ENCODE measurements at regions of chr13 and their contacts with region 1.

Region 1: GRCh38 chr13:31236211-31236786 is 36.5 kb downstream of the B3GLCT start:
- DNase-seq: peak in 4 of 5 donors; percentile 4 to 27 (median 8)
- H3K4me3 ChIP-seq: no peak overlapping the region
- H3K4me3 Mint-ChIP-seq: no peak overlapping the region
- H3K27ac ChIP-seq: no peak overlapping the region
- H3K27ac Mint-ChIP-seq: no peak overlapping the region
- H3K4me1 ChIP-seq: no peaks in the 10 kb centered on the region
- H3K4me1 Mint-ChIP-seq: peaks cover 0 to 4% (median 1%) of the 10 kb centered on the region in 4 donors
- H3K27me3 ChIP-seq: no peaks in the 10 kb centered on the region
- H3K27me3 Mint-ChIP-seq: no peaks in the 10 kb centered on the region

Region 2: DNA sequence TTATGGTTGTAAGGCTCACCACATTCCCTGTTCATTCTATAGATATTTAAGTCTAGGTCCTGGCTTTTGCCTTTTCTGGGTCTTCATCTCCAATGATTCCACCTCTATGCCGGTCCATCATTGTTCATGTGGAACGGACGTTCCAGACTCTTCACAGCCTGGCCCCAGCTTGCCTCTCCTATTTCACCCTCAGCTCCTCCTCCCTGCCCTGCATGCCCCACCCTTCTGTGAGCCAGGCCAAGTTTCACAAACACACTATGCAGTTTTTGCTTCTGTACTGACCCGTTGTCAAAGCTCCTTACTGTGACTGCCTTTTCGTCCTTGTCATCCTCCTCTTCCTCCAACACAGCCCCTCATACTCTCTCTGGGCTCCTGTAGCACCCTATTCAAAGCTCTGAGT is 272.5 kb before region 1 on chr13:
- CTCF ChIA-PET with region 1: no interaction called
- POLR2A ChIA-PET with region 1: no interaction called
- intact Hi-C with region 1: no loop called
- DNase-seq: no peak
- H3K4me3 ChIP-seq: no peak overlapping the region
- H3K4me3 Mint-ChIP-seq: no peak overlapping the region
- H3K27ac ChIP-seq: no peak overlapping the region
- H3K27ac Mint-ChIP-seq: no peak overlapping the region
- H3K4me1 ChIP-seq: no peaks in the 10 kb centered on the region
- H3K4me1 Mint-ChIP-seq: no peaks in the 10 kb centered on the region
- H3K27me3 ChIP-seq: no peaks in the 10 kb centered on the region
- H3K27me3 Mint-ChIP-seq: peaks cover 13 to 38% of the 10 kb centered on the region in 2 donors

Region 3: GRCh38 chr13:31246918-31247317 is 10.6 kb after region 1 on chr13:
- CTCF ChIA-PET with region 1: interaction called, 16 read pairs
- POLR2A ChIA-PET with region 1: no interaction called
- intact Hi-C with region 1: no loop called
- DNase-seq: no peak
- H3K4me3 ChIP-seq: no peak overlapping the region
- H3K4me3 Mint-ChIP-seq: no peak overlapping the region
- H3K27ac ChIP-seq: no peak overlapping the region
- H3K27ac Mint-ChIP-seq: peak overlapping the region in 1 of 7 donors; percentile 27
- H3K4me1 ChIP-seq: no peaks in the 10 kb centered on the region
- H3K4me1 Mint-ChIP-seq: peaks cover 0 to 3% (median 0%) of the 10 kb centered on the region in 4 donors
- H3K27me3 ChIP-seq: no peaks in the 10 kb centered on the region
- H3K27me3 Mint-ChIP-seq: no peaks in the 10 kb centered on the region

Measured in CD4-positive, alpha-beta memory T cell (primary cell).